Activated B cell treated with CpG ODN at 0.5 μM for 24 hours (primary cell): ENCODE measurements at regions of chr3 and their contacts with region 1.

Region 1: GRCh38 chr3:129439817-129440617 is at the starts of genes IFT122 and MBD4:
- DNase-seq: peak; percentile 92
- ATAC-seq: peak; percentile 83
- H3K4me3 Mint-ChIP-seq: peak within 1 kb of the TSS; percentile 96
- H3K27ac Mint-ChIP-seq: peak within 1 kb of the TSS; percentile 96
- H3K4me1 Mint-ChIP-seq: peaks cover 60% of the 10 kb centered on the region
- H3K27me3 Mint-ChIP-seq: no peaks in the 10 kb centered on the region
- CTCF ChIP-seq: no peak
- total RNA-seq, gene IFT122: 18.7 and 19.2 TPM in 2 replicates
- total RNA-seq, gene MBD4: 86.3 and 98.7 TPM in 2 replicates

Region 2: GRCh38 chr3:128680602-128681368 is 759.2 kb before region 1 on chr3:
- CTCF ChIA-PET with region 1: no interaction called
- POLR2A ChIA-PET with region 1: interaction called, 4 read pairs
- intact Hi-C with region 1: loop called (anchors 1 kb)
- DNase-seq: peak; percentile 93
- ATAC-seq: peak; percentile 96
- H3K4me3 Mint-ChIP-seq: peak overlapping the region; percentile 92
- H3K27ac Mint-ChIP-seq: peak overlapping the region; percentile 94
- H3K4me1 Mint-ChIP-seq: peaks cover 34% of the 10 kb centered on the region
- H3K27me3 Mint-ChIP-seq: no peaks in the 10 kb centered on the region
- CTCF ChIP-seq: peak; percentile 62

Region 3: DNA sequence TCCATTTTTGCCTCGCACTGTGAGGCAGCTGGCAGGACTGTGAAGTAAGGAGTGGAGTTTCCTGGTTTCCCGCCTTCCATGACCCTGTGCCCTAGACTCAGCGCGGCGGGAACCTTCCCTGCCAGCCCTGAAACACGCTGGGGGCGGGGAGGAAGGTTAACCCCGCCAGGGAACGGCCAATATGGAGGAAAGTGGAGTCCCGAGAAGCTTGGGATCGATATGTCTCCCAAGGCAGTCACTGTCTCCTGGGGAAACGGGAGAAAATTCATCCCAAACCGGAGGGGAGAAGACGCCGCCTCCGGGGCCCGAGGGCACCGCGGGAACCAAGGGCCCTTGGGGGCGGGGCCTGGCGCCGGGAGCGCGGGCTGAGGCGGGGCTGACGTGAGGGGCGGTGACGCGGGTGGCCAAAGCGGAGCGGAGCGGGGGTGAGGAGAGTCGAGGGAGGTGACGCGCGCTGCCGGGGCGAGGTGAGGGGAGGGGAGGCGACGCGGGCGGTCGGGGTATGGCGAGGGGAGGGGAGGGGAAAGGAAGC is 161.5 kb before region 1 on chr3 and contains the start of gene HMCES:
- CTCF ChIA-PET with region 1: no interaction called
- POLR2A ChIA-PET with region 1: interaction called, 4 read pairs
- intact Hi-C with region 1: loop called (anchors 2 kb)
- DNase-seq: peak; percentile 91
- ATAC-seq: peak; percentile 62
- H3K4me3 Mint-ChIP-seq: peak within 1 kb of the TSS; percentile 91
- H3K27ac Mint-ChIP-seq: peak within 1 kb of the TSS; percentile 86
- H3K4me1 Mint-ChIP-seq: peaks cover 80% of the 10 kb centered on the region
- H3K27me3 Mint-ChIP-seq: no peaks in the 10 kb centered on the region
- CTCF ChIP-seq: no peak
- total RNA-seq, gene HMCES: 31.7 and 37.2 TPM in 2 replicates

Region 4: DNA sequence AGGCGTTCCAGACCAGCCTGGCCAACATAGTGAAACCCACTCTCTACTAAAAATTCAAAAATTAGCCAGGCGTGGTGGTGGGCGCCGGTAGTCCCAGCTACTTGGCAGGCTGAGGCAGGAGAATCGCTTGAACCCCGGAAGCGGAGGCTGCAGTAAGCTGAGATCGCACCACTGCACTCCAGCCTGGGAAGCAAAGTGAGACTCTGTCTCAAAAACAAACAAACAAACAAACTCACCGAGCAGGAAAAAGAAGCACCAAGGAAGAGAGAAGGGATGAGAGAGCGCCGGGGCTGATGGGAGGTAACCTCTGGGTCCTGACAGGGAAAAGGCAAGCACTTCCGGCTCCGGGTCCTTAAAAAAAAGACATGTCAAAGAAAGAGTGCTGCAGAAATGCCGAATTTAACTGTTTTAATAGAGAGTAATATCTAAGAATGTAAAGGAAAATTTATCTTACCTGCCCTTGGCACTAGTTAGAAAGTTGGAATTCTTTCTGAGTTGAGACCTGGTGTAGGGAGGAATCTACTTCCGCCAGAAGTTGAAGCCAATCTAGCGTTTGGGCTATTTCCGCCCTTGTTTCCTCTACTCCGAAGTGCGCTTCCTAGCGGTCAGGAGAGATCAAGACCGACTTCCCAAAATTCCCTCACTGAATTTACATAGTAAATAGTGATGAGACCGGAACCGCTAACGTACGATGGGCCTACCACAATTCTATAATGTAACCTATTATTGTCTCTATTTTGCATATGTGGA is 40.7 kb before region 1 on chr3:
- CTCF ChIA-PET with region 1: interaction called, 5 read pairs
- POLR2A ChIA-PET with region 1: interaction called, 29 read pairs
- intact Hi-C with region 1: loop called (anchors 1 kb)
- DNase-seq: peak; percentile 50
- ATAC-seq: peak; percentile 80
- H3K4me3 Mint-ChIP-seq: peak overlapping the region; percentile 96
- H3K27ac Mint-ChIP-seq: peak overlapping the region; percentile 96
- H3K4me1 Mint-ChIP-seq: peaks cover 40% of the 10 kb centered on the region
- H3K27me3 Mint-ChIP-seq: no peaks in the 10 kb centered on the region
- CTCF ChIP-seq: peak; percentile 36

Region 5: GRCh38 chr3:129627429-129628168 is 187.6 kb after region 1 on chr3:
- CTCF ChIA-PET with region 1: no interaction called
- POLR2A ChIA-PET with region 1: interaction called, 4 read pairs
- intact Hi-C with region 1: loop called (anchors 2 kb)
- DNase-seq: peak; percentile 48
- ATAC-seq: peak; percentile 65
- H3K4me3 Mint-ChIP-seq: peak overlapping the region; percentile 93
- H3K27ac Mint-ChIP-seq: peak overlapping the region; percentile 76
- H3K4me1 Mint-ChIP-seq: peaks cover 21% of the 10 kb centered on the region
- H3K27me3 Mint-ChIP-seq: no peaks in the 10 kb centered on the region
- CTCF ChIP-seq: no peak

Region 6: DNA sequence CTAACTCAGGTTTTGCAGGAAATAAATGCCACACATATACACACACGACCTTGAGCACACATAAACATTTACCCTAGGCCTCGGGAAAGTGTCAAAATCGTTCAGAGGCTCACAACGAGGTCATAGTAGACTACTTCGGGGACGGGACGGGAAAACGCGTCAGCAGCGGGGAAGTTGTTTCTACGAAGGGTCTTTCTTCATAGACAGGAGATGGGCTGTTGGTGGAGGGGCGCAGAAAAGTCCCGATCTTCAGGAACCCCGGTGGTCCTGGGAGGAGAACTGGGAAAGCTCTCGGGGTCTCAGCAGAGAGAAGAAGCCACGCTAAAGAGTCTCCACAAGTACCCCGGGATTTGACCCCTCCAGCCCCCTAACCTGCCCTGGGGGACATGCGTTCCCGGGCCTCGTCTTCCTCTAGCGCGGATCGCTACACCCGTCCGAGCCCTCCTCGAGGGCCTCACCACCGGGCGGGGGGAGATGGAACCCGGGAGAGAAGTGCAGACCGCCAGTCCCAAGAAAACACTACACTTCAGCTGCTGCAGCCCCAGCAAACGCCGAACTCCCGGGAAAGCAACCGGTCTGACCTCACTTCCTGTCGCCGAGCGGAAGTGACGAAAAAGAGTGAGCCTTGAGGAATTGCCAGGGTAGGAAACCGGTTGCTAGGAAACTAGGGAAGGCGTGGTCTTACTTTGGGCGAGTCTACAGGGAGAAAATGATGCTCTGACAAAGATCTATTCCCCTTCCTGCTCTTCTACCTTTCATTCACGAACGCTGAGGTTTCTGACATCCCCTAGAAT is 1306.4 kb after region 1 on chr3 and contains the start of gene PIK3R4:
- CTCF ChIA-PET with region 1: no interaction called
- POLR2A ChIA-PET with region 1: no interaction called
- intact Hi-C with region 1: loop called (anchors 2 kb)
- DNase-seq: peak; percentile 82
- ATAC-seq: peak; percentile 80
- H3K4me3 Mint-ChIP-seq: peak within 1 kb of the TSS; percentile 87
- H3K27ac Mint-ChIP-seq: peak within 1 kb of the TSS; percentile 91
- H3K4me1 Mint-ChIP-seq: peaks cover 53% of the 10 kb centered on the region
- H3K27me3 Mint-ChIP-seq: no peaks in the 10 kb centered on the region
- CTCF ChIP-seq: no peak
- total RNA-seq, gene PIK3R4: 22.1 and 32.4 TPM in 2 replicates